ENCODE measurements at regions of chr1 and their contacts with region 1.

Region 1: GRCh38 chr1:208526613-208527125 is 282.5 kb upstream of the PLXNA2 start:
- DNase-seq: no peak
- ATAC-seq: no peak
- H3K4me3 Mint-ChIP-seq: no peak overlapping the region
- H3K27ac Mint-ChIP-seq: no peak overlapping the region
- H3K4me1 Mint-ChIP-seq: no peaks in the 10 kb centered on the region
- H3K27me3 Mint-ChIP-seq: peaks cover 13% of the 10 kb centered on the region

Region 2: GRCh38 chr1:208269338-208269666 is 257.4 kb before region 1 on chr1:
- CTCF ChIA-PET with region 1: no interaction called
- POLR2A ChIA-PET with region 1: no interaction called
- intact Hi-C with region 1: no loop called
- DNase-seq: no peak
- ATAC-seq: no peak
- H3K4me3 Mint-ChIP-seq: no peak overlapping the region
- H3K27ac Mint-ChIP-seq: no peak overlapping the region
- H3K4me1 Mint-ChIP-seq: no peaks in the 10 kb centered on the region
- H3K27me3 Mint-ChIP-seq: peaks cover 33% of the 10 kb centered on the region

Region 3: DNA sequence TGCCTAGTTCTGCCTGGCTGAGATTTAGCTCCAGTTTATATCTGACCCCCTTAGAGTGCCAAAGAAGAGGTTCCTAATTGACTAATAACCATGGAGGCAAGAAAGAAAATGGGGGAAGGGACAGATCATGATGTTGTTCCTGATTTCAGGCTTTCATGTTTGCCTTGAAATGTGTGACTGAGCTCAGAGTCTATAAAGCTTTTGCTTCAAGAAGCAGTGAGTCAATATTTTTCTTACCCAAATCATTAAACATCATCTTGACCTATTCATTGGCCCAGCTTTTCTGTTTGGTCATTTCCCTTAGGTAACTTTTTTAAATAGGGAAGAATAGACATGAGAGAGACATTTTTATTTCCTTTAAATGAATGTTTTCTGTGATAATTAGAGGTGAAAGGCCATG is 1858.0 kb after region 1 on chr1:
- CTCF ChIA-PET with region 1: no interaction called
- POLR2A ChIA-PET with region 1: interaction called, 10 read pairs
- intact Hi-C with region 1: no loop called
- DNase-seq: no peak
- ATAC-seq: no peak
- H3K4me3 Mint-ChIP-seq: no peak overlapping the region
- H3K27ac Mint-ChIP-seq: no peak overlapping the region
- H3K4me1 Mint-ChIP-seq: no peaks in the 10 kb centered on the region
- H3K27me3 Mint-ChIP-seq: no peaks in the 10 kb centered on the region